ENCODE measurements at regions of chr2 and their contacts with region 1.

Region 1: DNA sequence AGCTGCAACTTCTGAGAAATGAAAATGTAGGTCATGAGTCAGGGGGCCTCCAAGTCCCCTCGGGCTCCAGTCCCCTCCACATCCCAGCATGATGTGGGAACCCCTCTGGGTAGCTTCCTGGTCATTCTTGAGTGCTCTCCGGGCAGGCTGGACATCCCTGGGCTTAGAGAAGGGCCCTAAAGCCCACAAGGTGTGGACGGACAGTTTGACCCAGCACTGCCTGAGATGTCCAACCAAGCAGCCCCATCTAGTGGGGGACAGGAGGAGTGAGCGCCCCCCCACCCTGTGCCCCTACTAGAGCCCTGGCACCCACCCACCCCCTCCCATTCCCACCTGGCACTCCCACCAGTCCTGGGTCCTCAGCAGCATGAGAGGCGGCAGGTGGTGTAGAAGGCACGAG is 46.0 kb downstream of the CYP27C1 start:
- DNase-seq: peak; percentile 80
- H3K4me3 ChIP-seq: no peak overlapping the region
- H3K27ac ChIP-seq: no peak overlapping the region
- H3K4me1 ChIP-seq: peaks cover 0 to 32% of the 10 kb centered on the region in 2 experiments; a peak in 1 of 4 replicates
- H3K27me3 ChIP-seq: no peaks in the 10 kb centered on the region
- CTCF ChIP-seq: peak; percentile 36
- EP300 ChIP-seq: no peak
- RAD21 ChIP-seq: peak; percentile 66

Region 2: DNA sequence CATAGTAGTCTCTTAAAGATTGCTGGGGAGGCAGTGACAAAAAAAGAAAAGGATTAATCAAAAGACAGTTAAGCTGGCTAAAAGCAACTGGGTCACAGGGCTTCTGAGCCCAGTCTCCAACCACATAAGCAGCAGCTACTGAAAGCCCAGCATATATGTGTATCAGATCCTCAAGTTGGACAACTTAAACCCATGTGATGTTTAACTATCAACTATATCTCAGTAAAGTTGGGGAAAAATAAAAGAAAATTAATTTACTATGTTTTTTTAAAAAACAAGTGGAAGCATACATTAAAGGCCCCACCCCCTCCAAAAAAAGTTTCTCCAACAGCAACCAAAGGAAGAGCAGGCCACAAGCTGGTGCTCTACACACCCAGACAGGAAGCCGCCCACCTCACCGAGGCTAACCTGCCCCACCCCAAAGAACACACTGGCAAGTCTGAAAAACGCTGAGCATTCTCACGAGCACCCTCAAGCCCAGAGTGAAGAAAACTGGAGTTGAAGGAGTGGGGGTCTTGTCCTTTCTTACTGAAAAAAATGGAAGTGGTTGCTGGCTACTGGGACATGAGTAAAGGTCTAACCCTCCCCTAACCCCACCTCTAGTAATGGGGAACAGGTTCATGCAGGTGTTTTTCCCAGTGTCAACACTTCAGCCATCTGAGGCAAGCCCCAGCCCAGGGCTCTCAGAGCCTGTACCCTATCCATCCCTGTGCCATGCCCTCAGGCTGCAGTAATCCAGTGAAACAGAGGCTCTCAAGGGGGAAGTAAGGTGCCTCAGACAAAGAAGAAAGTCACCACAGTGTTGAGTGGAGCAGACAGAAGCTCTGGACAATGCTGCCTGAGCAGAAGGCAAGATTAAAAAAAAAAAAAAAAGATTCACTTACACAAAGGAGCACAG is 411.9 kb before region 1 on chr2:
- CTCF ChIA-PET with region 1: no interaction called
- POLR2A ChIA-PET with region 1: no interaction called
- DNase-seq: no peak
- H3K4me3 ChIP-seq: no peak overlapping the region
- H3K27ac ChIP-seq: no peak overlapping the region
- H3K4me1 ChIP-seq: no peaks in the 10 kb centered on the region
- H3K27me3 ChIP-seq: no peaks in the 10 kb centered on the region
- CTCF ChIP-seq: no peak
- EP300 ChIP-seq: no peak
- RAD21 ChIP-seq: no peak

Region 3: GRCh38 chr2:127157651-127158470 is 16.3 kb before region 1 on chr2:
- CTCF ChIA-PET with region 1: interaction called, 14 read pairs
- POLR2A ChIA-PET with region 1: no interaction called
- DNase-seq: peak; percentile 83
- H3K4me3 ChIP-seq: no peak overlapping the region
- H3K27ac ChIP-seq: no peak overlapping the region
- H3K4me1 ChIP-seq: peaks cover 2 to 10% of the 10 kb centered on the region in 2 experiments; a peak in 2 of 4 replicates
- H3K27me3 ChIP-seq: no peaks in the 10 kb centered on the region
- CTCF ChIP-seq: peak; percentile 31
- EP300 ChIP-seq: no peak
- RAD21 ChIP-seq: peak; percentile 73